Activated CD8-positive, alpha-beta T cell treated with anti-CD3 and anti-CD28 coated beads, Interleukin-2, amount 10 ng/mL, durations not matched to agents 7 days and 5 days (primary cell): ENCODE measurements at regions of chr20 and their contacts with region 1.

Region 1: DNA sequence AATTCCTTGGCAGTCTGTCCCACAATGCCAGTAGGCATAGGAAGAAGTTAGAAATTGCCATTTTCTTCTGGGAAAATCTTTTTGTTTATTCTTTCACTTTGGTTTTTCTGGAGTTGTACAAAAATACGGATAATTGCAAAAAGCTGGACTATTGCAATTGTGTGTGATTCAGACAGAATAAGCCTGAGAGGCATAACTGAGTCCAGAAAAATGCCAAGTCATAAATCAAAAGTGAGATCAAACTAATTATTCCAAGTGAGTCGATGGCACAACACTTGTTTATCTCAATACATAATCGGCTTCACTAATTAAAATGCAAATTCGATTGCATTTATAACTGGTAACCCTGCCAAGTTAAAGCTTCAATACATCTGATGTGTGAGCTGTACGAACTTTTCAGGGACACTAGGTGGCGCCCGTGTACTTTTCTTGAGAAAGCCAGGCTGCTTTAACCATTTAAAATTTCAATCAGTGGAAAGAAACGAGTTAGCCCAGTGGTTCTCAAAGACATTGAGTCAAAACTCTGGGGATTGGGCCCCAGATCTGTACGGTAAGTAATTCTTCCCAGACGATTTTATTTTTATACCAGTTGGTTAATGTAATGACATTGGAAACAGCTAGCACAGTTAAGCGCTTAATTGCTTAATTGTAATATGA is 102.6 kb downstream of the LAMP5 start:
- DNase-seq: peak; percentile 63
- ATAC-seq: no peak
- H3K4me3 Mint-ChIP-seq: no peak overlapping the region
- H3K27ac Mint-ChIP-seq: no peak overlapping the region
- H3K4me1 Mint-ChIP-seq: no peaks in the 10 kb centered on the region
- H3K27me3 Mint-ChIP-seq: no peaks in the 10 kb centered on the region

Region 2: DNA sequence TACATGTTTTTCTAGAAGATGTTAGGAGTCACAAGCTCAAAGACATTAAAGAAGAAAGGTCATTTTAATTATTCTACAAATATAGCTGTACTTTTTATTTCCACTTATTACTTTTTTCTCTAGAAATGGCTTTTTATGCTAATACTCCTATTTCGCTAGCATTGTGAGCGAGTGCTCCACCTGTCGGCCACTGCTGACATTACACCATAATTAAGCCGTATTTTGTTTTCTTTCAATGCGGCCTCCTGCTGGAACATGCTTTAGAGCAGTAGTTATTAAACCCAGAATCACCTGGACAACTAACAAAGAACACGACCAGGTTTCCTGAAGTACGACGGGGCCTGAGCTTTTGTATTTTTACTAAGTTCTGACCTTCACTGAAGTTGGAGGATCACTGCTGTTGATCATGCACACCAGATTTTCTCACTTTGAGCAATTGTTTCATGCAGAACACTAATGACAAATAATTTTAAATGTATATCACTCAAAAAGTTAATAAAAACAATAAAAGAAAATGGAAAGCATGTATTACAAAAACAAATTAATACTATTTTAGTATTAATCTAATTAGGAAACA is 296.0 kb after region 1 on chr20:
- CTCF ChIA-PET with region 1: interaction called, 41 read pairs
- POLR2A ChIA-PET with region 1: no interaction called
- DNase-seq: peak; percentile 44
- ATAC-seq: no peak
- H3K4me3 Mint-ChIP-seq: no peak overlapping the region
- H3K27ac Mint-ChIP-seq: no peak overlapping the region
- H3K4me1 Mint-ChIP-seq: peaks cover 6% of the 10 kb centered on the region
- H3K27me3 Mint-ChIP-seq: peaks cover 6% of the 10 kb centered on the region